ENCODE measurements at regions of chr16 and their contacts with region 1.

Region 1: DNA sequence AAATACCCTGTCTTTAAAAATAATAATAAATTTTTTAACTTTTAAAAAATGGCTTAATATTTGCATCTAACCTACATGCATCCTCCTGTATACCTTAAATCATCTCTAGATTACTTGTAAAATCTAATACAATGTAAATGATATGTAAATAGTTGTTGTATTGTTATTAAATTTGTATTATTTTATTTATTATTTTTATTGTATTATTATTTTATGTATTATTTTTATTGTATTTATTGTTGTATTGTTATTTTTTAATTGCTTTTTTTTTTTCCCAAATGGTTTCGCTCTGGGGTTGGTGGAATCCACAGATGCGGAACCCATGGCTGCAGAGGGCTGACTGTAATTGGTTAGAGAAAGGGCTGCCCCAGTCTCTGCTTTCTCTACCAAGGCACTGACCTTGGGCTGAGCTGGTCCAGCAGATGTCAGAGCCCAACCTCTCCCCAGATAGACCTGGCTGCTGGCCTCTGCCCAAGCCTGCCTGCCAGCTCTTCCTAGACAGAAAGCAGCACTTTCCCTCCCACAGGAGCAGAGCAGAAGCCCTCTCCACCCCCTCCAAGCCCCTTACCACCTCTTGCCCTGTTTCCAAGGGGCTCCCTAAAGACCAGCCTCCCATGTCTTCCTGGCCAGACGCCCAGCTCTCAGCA is 183.8 kb downstream of the GSG1L start:
- DNase-seq: peak in 2 of 10 donors; percentile 30 to 35

Region 2: DNA sequence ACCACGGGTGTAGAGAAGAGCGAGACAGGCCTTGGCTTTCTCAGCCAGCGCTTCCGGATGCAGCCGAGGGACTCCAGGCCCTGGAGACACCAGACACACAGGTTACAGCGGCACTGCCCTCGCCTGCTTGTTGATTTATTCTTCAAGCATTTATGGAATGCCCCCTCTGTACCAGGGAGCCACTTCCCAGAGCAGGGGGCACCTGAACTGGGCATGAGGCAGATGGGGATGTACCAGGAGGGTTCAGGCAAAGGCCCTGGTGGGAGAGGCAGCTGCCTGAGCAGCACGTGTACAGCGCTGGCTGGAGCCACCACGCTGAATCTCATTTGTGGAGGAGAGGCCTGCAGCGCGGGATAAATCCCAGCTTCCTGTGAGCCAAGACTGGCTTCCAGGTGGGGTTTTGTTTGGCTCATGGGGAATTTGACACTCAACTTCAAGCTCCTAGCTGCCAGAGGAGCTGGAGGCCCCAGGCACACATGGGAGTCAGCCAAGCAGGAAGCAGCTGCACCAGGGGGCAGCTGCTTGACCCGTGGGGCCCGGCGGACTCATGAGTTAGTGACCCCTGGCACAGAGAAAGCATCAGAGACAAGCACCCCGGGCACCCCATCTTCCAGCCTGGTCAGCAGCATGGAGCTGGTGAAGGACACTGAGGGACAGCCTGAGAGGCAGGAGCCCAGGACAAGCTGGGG is 418.1 kb before region 1 on chr16:
- intact Hi-C with region 1: no loop called
- DNase-seq: peak in 4 of 10 donors; percentile 3 to 84 (median 36)

Region 3: GRCh38 chr16:27639561-27640276 is 240.0 kb before region 1 on chr16:
- intact Hi-C with region 1: loop called (anchors 10 kb)
- DNase-seq: peak in 4 of 10 donors; percentile 24 to 38 (median 32)

Region 4: DNA sequence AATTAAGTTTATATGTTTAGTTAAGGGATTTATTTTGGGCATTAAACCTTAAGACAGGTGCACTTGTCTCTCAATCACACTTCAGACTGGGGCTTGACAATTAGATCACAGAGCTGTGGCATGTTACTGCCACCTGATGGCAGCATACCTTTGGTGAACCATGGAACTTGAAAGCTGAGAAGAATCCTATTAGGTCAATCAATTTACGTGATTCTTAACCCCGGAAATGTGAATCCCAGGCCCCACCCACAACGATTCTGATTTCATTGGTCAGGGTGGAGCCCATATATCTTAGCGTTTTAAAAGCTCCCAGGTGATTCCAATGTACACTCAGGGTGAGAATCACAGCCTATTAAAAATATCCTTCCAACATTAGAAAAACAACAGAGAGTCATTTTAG is 92.8 kb after region 1 on chr16:
- intact Hi-C with region 1: no loop called
- DNase-seq: peak in 2 of 10 donors; percentile 44 to 70